IMR-90 (cell line): ENCODE measurements at regions of chr6 and their contacts with region 1.

Region 1: DNA sequence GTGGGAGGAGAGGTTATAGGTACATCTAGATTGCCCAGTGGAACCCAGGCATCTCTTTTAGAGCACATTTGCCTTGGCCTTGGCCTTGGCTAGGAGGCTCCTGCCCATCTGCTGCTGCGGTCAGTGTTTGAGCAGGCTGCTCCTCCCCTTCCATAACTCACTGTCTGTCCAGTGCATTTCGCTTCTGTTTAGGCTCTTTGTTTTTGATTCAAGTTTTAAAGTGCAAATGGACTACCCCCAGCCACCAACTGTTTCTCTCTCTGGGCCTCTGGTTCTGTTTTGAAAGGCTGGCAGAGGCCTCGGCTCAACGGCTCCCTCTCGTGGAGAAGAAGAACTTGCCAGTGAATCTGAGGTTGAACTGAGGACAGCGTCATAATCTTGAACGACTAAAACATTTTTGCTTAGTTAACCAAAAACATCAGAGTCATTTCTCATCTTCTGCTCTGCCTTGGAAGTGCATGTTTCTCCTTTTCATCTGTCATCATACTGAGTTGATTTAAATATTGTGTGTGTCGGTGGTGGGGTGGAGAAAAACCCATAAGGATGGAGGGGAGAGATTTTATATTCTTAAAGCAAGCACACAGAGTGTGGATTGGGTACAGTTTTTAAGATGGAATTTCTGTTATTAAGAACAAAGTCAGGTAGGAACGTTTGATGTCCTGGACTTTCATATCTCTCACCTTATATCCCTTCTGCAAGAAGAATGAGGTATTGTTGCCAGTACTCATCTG is 171.4 kb downstream of the DTNBP1 start:
- DNase-seq: peak; percentile 78
- ATAC-seq: peak; percentile 91
- H3K4me3 ChIP-seq: no peak overlapping the region
- H3K27ac ChIP-seq: peak overlapping the region; percentile 30; the same call in 1 of the 2 replicates
- H3K4me1 ChIP-seq: peaks cover 13% of the 10 kb centered on the region
- H3K27me3 ChIP-seq: no peaks in the 10 kb centered on the region
- CTCF ChIP-seq: peak; percentile 91
- POLR2A ChIP-seq: no peak
- RAD21 ChIP-seq: peak; percentile 90

Region 2: DNA sequence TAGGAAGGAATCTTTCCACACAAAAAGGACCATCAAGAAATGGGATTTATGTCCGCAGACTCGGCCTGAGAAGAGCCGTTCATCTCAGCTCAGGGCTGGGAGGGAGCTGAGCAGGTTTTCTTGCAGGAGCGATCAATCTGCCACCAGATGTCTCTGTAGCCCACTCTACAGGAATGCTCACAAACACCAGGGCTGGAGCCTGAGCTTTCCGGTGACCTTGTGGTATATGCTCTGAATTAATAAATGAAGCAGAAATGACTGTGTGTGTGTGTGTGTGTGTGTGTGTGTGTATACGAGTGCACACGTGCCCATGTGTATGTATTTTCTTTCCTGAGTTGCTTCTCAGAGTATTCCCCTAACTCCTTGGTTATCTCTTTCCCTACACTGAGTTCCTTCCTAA is 1361.8 kb before region 1 on chr6:
- CTCF ChIA-PET with region 1: no interaction called
- POLR2A ChIA-PET with region 1: no interaction called
- dilution Hi-C with region 1: no loop called
- in situ Hi-C with region 1: no loop called
- intact Hi-C with region 1: loop called (anchors 10 kb)
- DNase-seq: peak; percentile 80
- ATAC-seq: peak; percentile 99
- H3K4me3 ChIP-seq: no peak overlapping the region
- H3K27ac ChIP-seq: no peak overlapping the region
- H3K4me1 ChIP-seq: no peaks in the 10 kb centered on the region
- H3K27me3 ChIP-seq: no peaks in the 10 kb centered on the region
- CTCF ChIP-seq: peak; percentile 55
- POLR2A ChIP-seq: no peak
- RAD21 ChIP-seq: peak; percentile 74

Region 3: GRCh38 chr6:14711056-14711703 is 780.2 kb before region 1 on chr6:
- CTCF ChIA-PET with region 1: no interaction called
- POLR2A ChIA-PET with region 1: no interaction called
- dilution Hi-C with region 1: no loop called
- in situ Hi-C with region 1: no loop called
- intact Hi-C with region 1: loop called (anchors 2 kb)
- DNase-seq: peak; percentile 98
- ATAC-seq: peak; percentile 70
- H3K4me3 ChIP-seq: no peak overlapping the region
- H3K27ac ChIP-seq: peak overlapping the region; percentile 69
- H3K4me1 ChIP-seq: peaks cover 18% of the 10 kb centered on the region
- H3K27me3 ChIP-seq: no peaks in the 10 kb centered on the region
- CTCF ChIP-seq: peak; percentile 81
- POLR2A ChIP-seq: peak; percentile 61
- RAD21 ChIP-seq: peak; percentile 78

Region 4: GRCh38 chr6:15879382-15880261 is 388.2 kb after region 1 on chr6:
- CTCF ChIA-PET with region 1: no interaction called
- POLR2A ChIA-PET with region 1: no interaction called
- dilution Hi-C with region 1: no loop called
- in situ Hi-C with region 1: no loop called
- intact Hi-C with region 1: no loop called
- DNase-seq: peak; percentile 13
- ATAC-seq: peak; percentile 14; the same call in 1 of the 2 replicates
- H3K4me3 ChIP-seq: no peak overlapping the region
- H3K27ac ChIP-seq: no peak overlapping the region
- H3K4me1 ChIP-seq: peaks cover 2% of the 10 kb centered on the region; the same call in 1 of the 2 replicates
- H3K27me3 ChIP-seq: peaks cover 19% of the 10 kb centered on the region
- CTCF ChIP-seq: no peak
- POLR2A ChIP-seq: no peak
- RAD21 ChIP-seq: no peak